ENCODE measurements at regions of chr14 and their contacts with region 1.

Region 1: GRCh38 chr14:75126679-75127473 is at the start of gene NEK9:
- DNase-seq: peak; percentile 89 to 94 (median 91)
- H3K4me3 ChIP-seq: peak within 1 kb of the TSS; percentile 82
- H3K27ac ChIP-seq: peak within 1 kb of the TSS; percentile 62 to 90
- H3K4me1 ChIP-seq: peaks cover 6% of the 10 kb centered on the region
- H3K27me3 ChIP-seq: no peaks in the 10 kb centered on the region
- CTCF ChIP-seq: peak in 1 of 3 donors; percentile 12
- EP300 ChIP-seq: no peak
- POLR2A ChIP-seq: peak; percentile 91
- total RNA-seq, gene NEK9: 58.1 to 140 (median 117) TPM

Region 2: GRCh38 chr14:75487155-75487671 is 360.3 kb after region 1 on chr14:
- intact Hi-C with region 1: loop called in 2 of 4 experiments (anchors 5 to 10 kb)
- DNase-seq: no peak
- H3K4me3 ChIP-seq: no peak overlapping the region
- H3K27ac ChIP-seq: no peak overlapping the region
- H3K4me1 ChIP-seq: no peaks in the 10 kb centered on the region
- H3K27me3 ChIP-seq: no peaks in the 10 kb centered on the region
- CTCF ChIP-seq: no peak
- EP300 ChIP-seq: no peak
- POLR2A ChIP-seq: no peak

Measured in ovary (tissue), 10 donors.